ENCODE measurements at regions of chr14 and their contacts with region 1.

Region 1: DNA sequence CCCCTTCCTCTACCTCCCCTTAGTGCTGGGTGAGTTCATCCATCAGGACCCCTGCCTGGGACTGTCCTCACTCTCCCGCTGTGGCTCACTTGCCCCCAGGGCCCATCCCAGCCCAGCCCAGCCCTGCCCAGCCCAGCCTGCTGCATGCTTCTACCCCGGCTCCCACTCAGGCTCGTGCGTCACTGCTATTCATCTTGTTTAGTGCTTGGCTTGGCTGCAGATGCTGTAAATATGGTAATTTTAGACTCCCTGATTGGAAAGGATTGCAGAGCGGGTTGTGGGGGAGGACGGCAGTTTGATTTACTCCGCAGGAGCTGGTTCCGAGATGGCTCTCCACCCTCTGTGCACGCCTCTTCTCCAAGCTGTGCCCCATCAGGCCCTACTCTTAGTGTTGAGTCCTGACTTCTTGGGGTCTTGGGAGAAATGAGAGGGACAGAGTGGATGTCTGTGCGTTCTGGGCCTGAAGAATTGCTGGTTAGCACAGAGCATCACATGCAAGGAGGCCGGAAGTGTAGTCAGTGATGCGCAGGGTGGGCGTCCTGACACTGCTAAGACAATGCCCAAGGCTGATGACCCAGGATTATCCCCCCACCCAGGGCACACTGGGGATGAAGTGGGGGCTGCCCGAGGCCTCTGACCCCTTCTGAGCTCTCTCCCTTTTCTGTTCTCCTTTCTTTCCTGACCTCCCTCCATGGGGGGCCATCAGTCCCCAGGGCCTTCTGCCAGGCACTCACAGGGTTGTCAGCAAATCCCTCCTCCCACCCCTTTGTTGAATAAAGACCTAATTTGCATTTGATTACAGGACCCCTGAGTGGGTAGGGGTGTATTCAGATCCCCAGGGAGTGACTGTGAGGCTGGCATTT is 244.4 kb downstream of the ZFP36L1 start:
- DNase-seq: peak; percentile 82
- ATAC-seq: peak; percentile 77
- H3K4me3 ChIP-seq: peak overlapping the region; percentile 4 to 38; a peak in 3 of 4 replicates
- H3K27ac ChIP-seq: peak overlapping the region; percentile 98
- H3K4me1 ChIP-seq: peaks cover 74 to 94% of the 10 kb centered on the region in 2 experiments
- H3K27me3 ChIP-seq: no peaks in the 10 kb centered on the region
- CTCF ChIP-seq: no peak
- POLR2A ChIP-seq: no peak
- RAD21 ChIP-seq: no peak

Region 2: DNA sequence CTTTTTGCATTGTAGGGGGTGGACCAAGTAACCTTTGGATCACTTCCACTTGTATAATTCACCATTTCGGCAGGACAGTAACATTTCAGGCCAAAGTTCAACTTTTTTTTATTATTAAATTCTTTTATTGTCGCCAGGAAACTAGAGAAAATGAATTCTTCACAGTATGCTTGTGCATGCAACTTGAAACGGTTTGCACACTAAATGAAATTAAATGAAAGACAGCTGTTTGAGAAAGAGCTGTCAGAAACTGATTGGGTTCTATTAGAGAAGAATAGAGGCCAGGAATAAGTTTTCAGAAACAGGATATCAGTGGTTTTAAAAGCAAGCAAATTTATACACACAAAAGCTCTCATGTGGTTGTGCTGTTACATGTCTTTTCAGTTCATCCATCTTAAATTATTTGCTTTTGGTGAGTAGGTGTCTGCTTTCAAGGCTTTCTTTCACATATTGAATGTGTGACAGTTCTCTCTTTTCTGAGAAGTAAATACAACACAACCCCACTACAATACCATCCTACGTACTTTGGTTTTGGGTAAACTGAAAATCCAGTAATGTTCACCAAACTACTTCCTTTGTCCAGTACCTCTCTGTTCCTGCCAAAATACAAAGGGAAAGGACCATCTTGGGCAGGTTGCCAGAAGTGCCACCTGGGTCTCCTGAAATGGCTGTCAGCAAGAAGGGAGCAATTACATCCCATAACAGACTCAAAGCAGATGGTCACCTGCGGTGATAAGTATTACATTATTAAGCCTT is 437.1 kb before region 1 on chr14:
- CTCF ChIA-PET with region 1: no interaction called
- POLR2A ChIA-PET with region 1: no interaction called
- RAD21 ChIA-PET with region 1: no interaction called
- intact Hi-C with region 1: no loop called
- DNase-seq: no peak
- ATAC-seq: no peak
- H3K4me3 ChIP-seq: no peak overlapping the region
- H3K27ac ChIP-seq: peak overlapping the region; percentile 3; the same call in 1 of the 2 replicates
- H3K4me1 ChIP-seq: peaks cover 0 to 18% of the 10 kb centered on the region in 2 experiments; a peak in 1 of 4 replicates
- H3K27me3 ChIP-seq: no peaks in the 10 kb centered on the region
- CTCF ChIP-seq: no peak
- POLR2A ChIP-seq: no peak
- RAD21 ChIP-seq: no peak

Region 3: GRCh38 chr14:68466491-68467032 is 81.9 kb before region 1 on chr14:
- CTCF ChIA-PET with region 1: no interaction called
- POLR2A ChIA-PET with region 1: interaction called, 4 read pairs
- RAD21 ChIA-PET with region 1: no interaction called
- intact Hi-C with region 1: loop called (anchors 1 kb)
- DNase-seq: peak; percentile 78
- ATAC-seq: peak; percentile 55
- H3K4me3 ChIP-seq: peak overlapping the region; percentile 1 to 41
- H3K27ac ChIP-seq: peak overlapping the region; percentile 92
- H3K4me1 ChIP-seq: peaks cover 73 to 84% of the 10 kb centered on the region in 2 experiments
- H3K27me3 ChIP-seq: no peaks in the 10 kb centered on the region
- CTCF ChIP-seq: no peak
- POLR2A ChIP-seq: no peak
- RAD21 ChIP-seq: no peak

Region 4: DNA sequence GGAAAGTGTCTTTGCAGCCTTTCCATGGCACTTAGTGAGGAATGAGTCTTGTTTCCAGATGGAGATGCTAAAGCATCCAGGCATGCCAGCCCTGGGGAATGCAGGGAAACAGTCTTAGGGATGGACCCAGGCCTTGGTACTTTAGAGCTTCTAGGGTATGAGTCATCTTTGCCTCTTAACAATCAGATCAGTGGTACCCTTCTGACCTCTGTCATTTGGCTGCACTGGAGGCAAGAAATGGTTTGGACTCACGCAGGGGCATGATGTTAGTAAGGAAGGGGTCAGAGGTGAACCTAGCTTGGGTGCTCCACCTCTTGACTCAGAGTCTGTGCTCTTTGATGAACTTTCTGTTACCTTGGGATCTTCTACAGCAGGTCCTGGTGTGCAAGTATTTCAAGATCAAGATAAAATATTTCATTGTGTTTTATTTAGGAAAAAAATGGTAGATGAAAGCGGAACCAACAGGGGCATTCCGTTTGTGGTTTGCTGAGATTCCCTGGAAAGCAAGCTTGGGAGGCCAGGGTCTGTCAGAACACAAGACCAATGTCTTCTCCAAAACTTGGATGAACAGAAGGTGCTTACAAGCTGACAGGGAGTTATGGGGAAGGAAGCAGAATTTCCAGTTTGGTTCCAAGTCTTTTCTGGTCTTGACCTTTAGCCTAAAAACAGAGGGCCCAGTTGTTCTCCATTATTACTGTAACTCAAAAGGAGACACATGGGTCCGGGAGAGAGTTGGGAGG is 28.2 kb after region 1 on chr14:
- CTCF ChIA-PET with region 1: no interaction called
- POLR2A ChIA-PET with region 1: interaction called, 9 read pairs
- RAD21 ChIA-PET with region 1: interaction called in 1 of 2 experiments, 12 read pairs
- intact Hi-C with region 1: no loop called
- DNase-seq: peak; percentile 84
- ATAC-seq: peak; percentile 85
- H3K4me3 ChIP-seq: 0 out of 4 replicates have a peak overlapping the region, but pooled peaks of 1 of the 2 experiments have one; percentile 9
- H3K27ac ChIP-seq: peak overlapping the region; percentile 83
- H3K4me1 ChIP-seq: peaks cover 61 to 64% of the 10 kb centered on the region in 2 experiments
- H3K27me3 ChIP-seq: no peaks in the 10 kb centered on the region
- CTCF ChIP-seq: no peak
- POLR2A ChIP-seq: no peak
- RAD21 ChIP-seq: peak; percentile 24

Region 5: GRCh38 chr14:68695326-68695768 is 146.9 kb after region 1 on chr14:
- CTCF ChIA-PET with region 1: no interaction called
- POLR2A ChIA-PET with region 1: no interaction called
- RAD21 ChIA-PET with region 1: no interaction called
- intact Hi-C with region 1: loop called (anchors 5 kb)
- DNase-seq: peak; percentile 91
- ATAC-seq: peak; percentile 83
- H3K4me3 ChIP-seq: no peak overlapping the region
- H3K27ac ChIP-seq: peak overlapping the region; percentile 61
- H3K4me1 ChIP-seq: peaks cover 21 to 36% of the 10 kb centered on the region in 2 experiments
- H3K27me3 ChIP-seq: no peaks in the 10 kb centered on the region
- CTCF ChIP-seq: no peak
- POLR2A ChIP-seq: no peak
- RAD21 ChIP-seq: peak; percentile 29

Region 6: GRCh38 chr14:68795597-68796417 is 247.4 kb after region 1 on chr14:
- CTCF ChIA-PET with region 1: no interaction called
- POLR2A ChIA-PET with region 1: interaction called, 10 read pairs
- RAD21 ChIA-PET with region 1: no interaction called
- intact Hi-C with region 1: loop called (anchors 2 kb)
- DNase-seq: no peak
- ATAC-seq: peak; percentile 68
- H3K4me3 ChIP-seq: peak overlapping the region; percentile 83 to 89
- H3K27ac ChIP-seq: peak overlapping the region; percentile 99
- H3K4me1 ChIP-seq: peaks cover 27 to 57% of the 10 kb centered on the region in 2 experiments
- H3K27me3 ChIP-seq: no peaks in the 10 kb centered on the region
- CTCF ChIP-seq: peak in 2 of 3 experiments; percentile 58 to 71; a peak in 4 of 6 replicates
- POLR2A ChIP-seq: no peak
- RAD21 ChIP-seq: no peak